Activated B cell treated with CpG ODN at 0.5 μM for 24 hours (primary cell): ENCODE measurements at regions of chr6 and their contacts with region 1.

Region 1: DNA sequence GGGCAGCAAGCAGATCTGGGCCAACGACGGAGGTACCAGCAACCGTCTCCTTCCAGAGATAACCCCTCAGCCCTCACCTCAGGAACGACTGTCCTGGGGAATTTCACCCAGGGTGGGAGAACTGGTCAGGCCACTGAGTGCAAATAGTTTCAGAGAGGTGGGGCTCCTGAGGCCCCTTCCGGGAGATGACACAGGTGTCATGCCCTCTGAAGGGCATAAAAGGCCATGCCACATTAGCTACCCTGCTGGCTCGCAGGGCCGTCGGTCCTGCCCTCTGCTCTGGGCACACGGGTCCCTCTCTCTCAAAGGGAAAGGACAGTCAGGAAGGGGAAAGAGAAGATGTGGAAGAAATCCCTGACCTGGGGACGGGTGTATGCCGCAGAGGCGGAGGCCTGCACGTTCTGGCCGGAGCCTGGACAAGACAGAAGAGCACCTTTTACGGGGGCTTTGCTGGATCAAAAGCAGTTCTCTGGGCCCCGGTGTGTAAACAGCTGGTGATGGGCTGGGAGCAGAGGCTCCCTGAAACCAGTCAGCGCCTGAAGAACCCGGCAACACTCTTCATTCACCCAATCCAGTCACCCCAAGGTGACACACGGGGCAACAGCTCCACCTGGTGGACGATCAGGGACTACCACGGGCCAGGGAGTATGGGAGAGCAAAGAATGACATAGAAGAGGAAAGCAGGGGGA is 6.4 kb upstream of the TAF8 start:
- DNase-seq: peak; percentile 87
- ATAC-seq: peak; percentile 44
- H3K4me3 Mint-ChIP-seq: peak overlapping the region; percentile 56
- H3K27ac Mint-ChIP-seq: peak overlapping the region; percentile 99
- H3K4me1 Mint-ChIP-seq: peaks cover 86% of the 10 kb centered on the region
- H3K27me3 Mint-ChIP-seq: no peaks in the 10 kb centered on the region
- CTCF ChIP-seq: peak; percentile 69

Region 2: GRCh38 chr6:41735427-41736356 is 308.2 kb before region 1 on chr6 and contains the start of gene TFEB:
- CTCF ChIA-PET with region 1: interaction called, 6 read pairs
- POLR2A ChIA-PET with region 1: interaction called, 33 read pairs
- intact Hi-C with region 1: loop called (anchors 2 kb)
- DNase-seq: peak; percentile 99
- ATAC-seq: peak; percentile 41
- H3K4me3 Mint-ChIP-seq: peak within 1 kb of the TSS; percentile 84
- H3K27ac Mint-ChIP-seq: peak within 1 kb of the TSS; percentile 84
- H3K4me1 Mint-ChIP-seq: peaks cover 28% of the 10 kb centered on the region
- H3K27me3 Mint-ChIP-seq: no peaks in the 10 kb centered on the region
- CTCF ChIP-seq: peak; percentile 26
- total RNA-seq, gene TFEB: 203 and 205 TPM in 2 replicates

Region 3: GRCh38 chr6:41801380-41801779 is 242.6 kb before region 1 on chr6:
- CTCF ChIA-PET with region 1: interaction called, 19 read pairs
- POLR2A ChIA-PET with region 1: no interaction called
- intact Hi-C with region 1: loop called (anchors 1 kb)
- DNase-seq: no peak
- ATAC-seq: no peak
- H3K4me3 Mint-ChIP-seq: no peak overlapping the region
- H3K27ac Mint-ChIP-seq: no peak overlapping the region
- H3K4me1 Mint-ChIP-seq: no peaks in the 10 kb centered on the region
- H3K27me3 Mint-ChIP-seq: no peaks in the 10 kb centered on the region
- CTCF ChIP-seq: no peak

Region 4: GRCh38 chr6:41901882-41902519 is 141.9 kb before region 1 on chr6:
- CTCF ChIA-PET with region 1: interaction called, 13 read pairs
- POLR2A ChIA-PET with region 1: interaction called, 60 read pairs
- intact Hi-C with region 1: loop called (anchors 1 kb)
- DNase-seq: no peak
- ATAC-seq: peak; percentile 37
- H3K4me3 Mint-ChIP-seq: no peak overlapping the region
- H3K27ac Mint-ChIP-seq: no peak overlapping the region
- H3K4me1 Mint-ChIP-seq: no peaks in the 10 kb centered on the region
- H3K27me3 Mint-ChIP-seq: no peaks in the 10 kb centered on the region
- CTCF ChIP-seq: no peak

Region 5: DNA sequence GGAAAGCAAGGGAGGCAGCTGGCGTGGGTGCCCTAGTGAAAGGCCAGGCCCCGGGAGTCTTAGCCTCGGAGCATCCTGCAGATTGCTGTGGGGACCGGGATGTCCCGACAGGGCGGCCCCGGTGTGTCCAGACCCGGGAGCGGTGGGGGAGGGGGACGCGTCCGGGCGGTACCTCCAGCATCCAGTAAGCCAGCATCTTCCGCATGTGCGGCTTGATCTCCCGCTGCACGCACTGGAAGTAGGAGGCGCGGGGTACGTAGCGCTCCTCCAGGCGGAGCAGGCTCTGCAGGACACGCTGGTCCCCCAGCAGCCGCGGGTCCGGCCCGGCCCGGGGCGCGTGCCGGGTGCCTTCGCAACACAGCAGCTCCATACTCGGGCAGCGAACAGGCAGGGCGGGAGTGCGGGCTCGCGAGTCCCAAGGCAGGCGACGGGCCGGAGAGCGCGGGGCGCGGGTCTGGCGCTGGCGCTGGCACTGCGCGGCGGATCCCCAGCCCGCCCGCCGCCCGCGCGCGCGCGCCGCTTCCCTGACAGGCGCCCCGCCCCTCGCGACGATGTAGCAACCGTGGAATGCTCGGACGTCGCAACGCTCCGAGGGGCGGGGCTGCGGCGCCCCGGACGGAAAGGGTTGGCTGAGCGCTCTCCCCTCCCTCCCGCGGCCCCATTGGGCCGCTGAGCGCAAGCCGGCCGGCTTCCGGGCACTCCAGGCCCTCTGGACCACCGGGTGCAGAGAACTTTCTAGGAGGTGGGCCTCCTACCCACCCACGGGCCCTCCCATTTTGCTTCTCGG is 102.5 kb before region 1 on chr6 and contains the start of gene CCND3:
- CTCF ChIA-PET with region 1: interaction called, 90 read pairs
- POLR2A ChIA-PET with region 1: interaction called, 195 read pairs
- intact Hi-C with region 1: loop called (anchors 1 kb)
- DNase-seq: peak; percentile 85
- ATAC-seq: peak; percentile 92
- H3K4me3 Mint-ChIP-seq: peak within 1 kb of the TSS; percentile 90
- H3K27ac Mint-ChIP-seq: peak within 1 kb of the TSS; percentile 89
- H3K4me1 Mint-ChIP-seq: peaks cover 53% of the 10 kb centered on the region
- H3K27me3 Mint-ChIP-seq: no peaks in the 10 kb centered on the region
- CTCF ChIP-seq: no peak
- total RNA-seq, gene CCND3: 70.7 and 75.2 TPM in 2 replicates

Region 6: GRCh38 chr6:42131531-42131930 is 87.6 kb after region 1 on chr6:
- CTCF ChIA-PET with region 1: no interaction called
- POLR2A ChIA-PET with region 1: no interaction called
- intact Hi-C with region 1: no loop called
- DNase-seq: no peak
- ATAC-seq: no peak
- H3K4me3 Mint-ChIP-seq: no peak overlapping the region
- H3K27ac Mint-ChIP-seq: no peak overlapping the region
- H3K4me1 Mint-ChIP-seq: peaks cover 3% of the 10 kb centered on the region
- H3K27me3 Mint-ChIP-seq: no peaks in the 10 kb centered on the region
- CTCF ChIP-seq: no peak

Region 7: DNA sequence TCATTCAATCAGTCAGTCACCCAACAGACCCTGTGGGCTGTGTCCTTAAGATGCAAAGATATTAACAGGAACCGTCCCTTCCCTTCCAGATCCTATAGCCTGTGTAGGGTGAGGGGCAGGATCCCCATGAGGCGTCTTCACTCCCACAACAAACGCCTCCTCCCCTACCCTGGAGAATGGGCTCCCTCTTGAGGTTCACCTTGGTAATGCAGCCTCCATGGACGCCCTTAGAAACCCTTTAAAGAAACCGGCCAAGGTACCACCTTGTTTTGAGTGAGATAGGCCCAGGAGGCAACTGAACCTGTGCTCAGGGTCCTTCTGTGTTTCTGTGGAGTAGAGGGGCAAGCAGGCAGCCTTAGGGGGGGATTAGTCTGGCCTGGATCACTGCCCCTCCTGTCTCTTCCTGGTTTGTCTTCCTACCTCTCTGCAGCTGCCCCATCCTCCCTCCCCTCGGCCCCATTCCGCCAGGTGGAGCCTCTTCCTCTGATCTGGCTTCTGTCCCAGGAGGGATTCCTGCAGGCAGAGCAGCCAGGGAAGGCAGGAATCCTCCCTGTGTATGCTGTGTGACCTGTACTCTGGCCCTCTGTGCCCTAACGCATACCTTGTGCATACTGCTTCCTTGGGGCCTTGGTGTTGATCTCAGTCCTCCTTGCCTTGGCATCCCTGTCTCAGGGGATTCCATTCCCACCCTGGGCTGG is 122.7 kb after region 1 on chr6:
- CTCF ChIA-PET with region 1: interaction called, 4 read pairs
- POLR2A ChIA-PET with region 1: interaction called, 10 read pairs
- intact Hi-C with region 1: no loop called
- DNase-seq: peak; percentile 50
- ATAC-seq: peak; percentile 91
- H3K4me3 Mint-ChIP-seq: no peak overlapping the region
- H3K27ac Mint-ChIP-seq: peak overlapping the region; percentile 31
- H3K4me1 Mint-ChIP-seq: no peaks in the 10 kb centered on the region
- H3K27me3 Mint-ChIP-seq: peaks cover 6% of the 10 kb centered on the region
- CTCF ChIP-seq: no peak

Region 8: GRCh38 chr6:44002593-44003344 is 1958.8 kb after region 1 on chr6:
- CTCF ChIA-PET with region 1: no interaction called
- POLR2A ChIA-PET with region 1: interaction called, 15 read pairs
- intact Hi-C with region 1: no loop called
- DNase-seq: peak; percentile 49
- ATAC-seq: peak; percentile 61
- H3K4me3 Mint-ChIP-seq: peak overlapping the region; percentile 76
- H3K27ac Mint-ChIP-seq: no peak overlapping the region
- H3K4me1 Mint-ChIP-seq: peaks cover 20% of the 10 kb centered on the region
- H3K27me3 Mint-ChIP-seq: peaks cover 49% of the 10 kb centered on the region
- CTCF ChIP-seq: no peak